Activated CD4-positive, alpha-beta T cell treated with anti-CD3 and anti-CD28 coated beads, Interleukin-2, amount 10 ng/mL, durations not matched to agents 24 days and 14 days (primary cell): ENCODE measurements at regions of chr20 and their contacts with region 1.

Region 1: DNA sequence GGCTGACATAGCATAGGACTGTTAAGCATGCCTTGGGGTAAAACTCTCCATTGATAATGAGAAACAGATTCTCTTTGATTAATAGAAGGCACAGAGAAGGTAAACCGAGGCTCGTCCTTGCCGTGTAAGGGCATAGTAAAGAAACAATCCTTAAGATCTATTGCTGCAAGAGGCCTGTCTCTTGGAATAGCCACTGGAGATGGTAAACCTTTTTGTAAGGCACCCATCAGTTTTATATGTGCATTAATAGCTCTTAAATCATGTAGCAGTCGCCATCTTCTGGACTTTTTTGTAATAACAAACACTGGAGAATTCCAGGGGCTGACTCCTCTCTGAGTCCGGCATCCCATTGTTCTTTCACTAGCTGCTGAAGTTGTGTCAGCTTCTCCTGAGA is 8.4 kb upstream of the ABHD12 start:
- DNase-seq: peak; percentile 80
- H3K4me3 Mint-ChIP-seq: no peak overlapping the region
- H3K27ac Mint-ChIP-seq: no peak overlapping the region
- H3K4me1 Mint-ChIP-seq: peaks cover under 1% of the 10 kb centered on the region
- H3K27me3 Mint-ChIP-seq: no peaks in the 10 kb centered on the region

Region 2: DNA sequence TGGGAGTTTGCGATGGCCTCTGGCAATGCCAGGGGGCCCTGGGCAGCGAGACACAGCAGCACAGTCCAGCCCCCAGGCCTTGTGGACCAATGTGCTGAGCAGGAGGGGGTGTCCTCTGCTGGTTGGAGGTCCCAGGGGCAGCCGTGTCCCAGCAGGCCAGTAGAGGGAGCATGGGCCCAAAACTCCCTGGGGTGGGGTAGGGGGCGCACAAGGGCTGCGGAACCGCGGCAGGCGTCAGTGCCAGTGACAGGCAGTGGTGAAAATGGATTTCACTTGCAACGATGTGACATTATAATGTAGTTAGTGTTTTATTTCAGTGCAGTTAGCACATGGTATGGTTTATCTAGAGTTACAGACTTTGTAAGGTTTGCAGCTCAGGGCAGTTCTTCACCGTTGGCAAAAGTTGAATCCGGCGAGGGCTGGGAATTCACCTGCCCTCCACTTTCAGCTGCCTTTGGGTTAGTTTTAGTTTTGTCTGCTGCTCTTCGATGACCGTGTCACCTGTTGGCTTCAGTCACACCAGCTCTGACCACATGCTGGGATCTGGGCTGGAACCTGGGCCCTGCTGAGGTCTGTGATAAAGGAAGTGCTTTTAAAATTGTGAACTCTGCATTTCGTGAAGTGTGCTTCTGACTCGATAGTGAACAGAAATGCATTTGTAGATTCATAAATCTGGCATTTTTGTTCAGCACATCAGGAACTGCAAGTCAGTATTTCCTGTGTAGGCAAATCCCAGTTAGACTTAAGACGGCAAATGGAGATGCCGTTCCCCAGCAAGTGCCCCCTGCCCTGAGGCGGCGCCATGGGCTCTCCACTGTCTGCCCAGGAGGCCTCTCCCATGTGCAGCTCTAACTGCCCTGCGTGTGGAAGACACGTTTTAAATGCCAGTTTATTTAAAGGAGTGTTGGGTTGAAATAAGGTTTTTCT is 104.3 kb before region 1 on chr20:
- intact Hi-C with region 1: loop called (anchors 1 kb)
- DNase-seq: peak; percentile 86
- H3K4me3 Mint-ChIP-seq: no peak overlapping the region
- H3K27ac Mint-ChIP-seq: no peak overlapping the region
- H3K4me1 Mint-ChIP-seq: no peaks in the 10 kb centered on the region
- H3K27me3 Mint-ChIP-seq: no peaks in the 10 kb centered on the region